GM12878 (cell line): ENCODE measurements at regions of chr6 and their contacts with region 1.

Region 1: GRCh38 chr6:111614833-111615582 is 9.3 kb upstream of the TRAF3IP2 start:
- DNase-seq: no peak
- ATAC-seq: peak; percentile 48; the same call in 1 of the 3 replicates
- H3K4me3 ChIP-seq: no peak overlapping the region
- H3K27ac ChIP-seq: no peak overlapping the region
- H3K4me1 ChIP-seq: no peaks in the 10 kb centered on the region
- H3K27me3 ChIP-seq: no peaks in the 10 kb centered on the region; a peak in 2 of 4 replicates
- CTCF ChIP-seq: no peak
- EP300 ChIP-seq: no peak
- POLR2A ChIP-seq: no peak
- RAD21 ChIP-seq: no peak

Region 2: GRCh38 chr6:111517965-111518364 is 97.0 kb before region 1 on chr6:
- CTCF ChIA-PET with region 1: no interaction called
- POLR2A ChIA-PET with region 1: no interaction called
- RAD21 ChIA-PET with region 1: no interaction called
- SMC1A ChIA-PET with region 1: no interaction called
- in situ Hi-C with region 1: no loop called
- intact Hi-C with region 1: no loop called
- DNase-seq: no peak
- ATAC-seq: no peak
- H3K4me3 ChIP-seq: no peak overlapping the region
- H3K27ac ChIP-seq: no peak overlapping the region
- H3K4me1 ChIP-seq: no peaks in the 10 kb centered on the region
- H3K27me3 ChIP-seq: no peaks in the 10 kb centered on the region
- CTCF ChIP-seq: no peak
- EP300 ChIP-seq: no peak
- POLR2A ChIP-seq: no peak
- RAD21 ChIP-seq: no peak

Region 3: GRCh38 chr6:111593512-111593816 is 21.5 kb before region 1 on chr6:
- CTCF ChIA-PET with region 1: no interaction called
- POLR2A ChIA-PET with region 1: interaction called, 10 read pairs
- RAD21 ChIA-PET with region 1: no interaction called
- SMC1A ChIA-PET with region 1: no interaction called
- in situ Hi-C with region 1: no loop called
- intact Hi-C with region 1: no loop called
- DNase-seq: no peak
- ATAC-seq: no peak
- H3K4me3 ChIP-seq: no peak overlapping the region
- H3K27ac ChIP-seq: no peak overlapping the region
- H3K4me1 ChIP-seq: no peaks in the 10 kb centered on the region
- H3K27me3 ChIP-seq: no peaks in the 10 kb centered on the region
- CTCF ChIP-seq: no peak
- EP300 ChIP-seq: no peak
- POLR2A ChIP-seq: no peak
- RAD21 ChIP-seq: no peak